A549 (cell line): ENCODE measurements at regions of chr11 and their contacts with region 1.

Region 1: GRCh38 chr11:44621140-44621681 is 55.7 kb downstream of the CD82 start:
- DNase-seq: peak; percentile 75 to 82
- ATAC-seq: peak; percentile 72 to 93
- H3K4me3 ChIP-seq: peak overlapping the region; percentile 38
- H3K27ac ChIP-seq: peak overlapping the region; percentile 67 to 69
- H3K4me1 ChIP-seq: no peaks in the 10 kb centered on the region
- CTCF ChIP-seq: peak; percentile 96
- EP300 ChIP-seq: no peak
- POLR2A ChIP-seq: no peak
- RAD21 ChIP-seq: peak; percentile 95 to 99

Region 2: DNA sequence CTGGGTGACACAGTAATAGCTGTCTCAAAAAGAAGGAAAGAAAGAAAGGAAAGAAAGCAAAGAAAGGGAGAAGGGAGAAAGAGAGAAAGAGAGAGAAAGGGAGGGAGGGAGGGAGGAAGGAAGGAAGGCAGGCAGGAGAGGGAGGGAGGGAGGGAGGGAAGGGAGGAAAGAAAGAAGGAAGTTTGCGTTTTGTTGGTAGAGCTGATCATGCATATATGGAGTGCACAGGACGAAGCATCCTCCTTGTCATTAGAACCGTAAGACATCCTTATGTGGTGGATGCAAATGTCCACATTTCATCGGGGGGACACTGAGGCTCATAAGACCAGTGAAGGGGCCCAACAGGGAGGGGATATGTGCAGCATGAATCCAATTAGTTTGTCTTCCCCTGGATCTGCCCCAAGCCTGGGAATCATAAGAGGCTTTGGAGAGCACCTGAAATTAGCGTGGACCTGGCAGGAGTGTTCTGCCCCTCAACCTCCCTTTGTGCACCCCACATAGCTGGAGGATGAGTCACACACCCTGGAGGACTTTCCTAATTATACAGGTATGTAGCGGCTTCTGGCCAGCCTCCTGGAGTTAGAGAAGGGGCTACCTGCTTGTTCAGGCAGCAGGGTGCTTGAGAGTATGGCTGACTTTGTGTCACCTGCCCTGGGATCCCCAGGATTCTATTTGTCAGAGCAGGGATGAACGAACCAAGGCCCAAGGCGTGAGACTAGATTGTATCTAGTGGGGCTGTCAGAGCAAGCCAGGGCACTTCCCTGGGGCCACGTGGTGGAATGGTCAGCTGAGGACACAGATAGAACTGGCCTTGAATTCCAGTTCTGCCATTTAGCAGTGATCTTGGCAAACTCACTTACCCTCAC is 175.5 kb before region 1 on chr11:
- CTCF ChIA-PET with region 1: no interaction called
- POLR2A ChIA-PET with region 1: no interaction called
- DNase-seq: peak in 1 of 2 experiments; percentile 5
- ATAC-seq: peak; percentile 58 to 64; a peak in 5 of 6 replicates
- H3K4me3 ChIP-seq: no peak overlapping the region
- H3K27ac ChIP-seq: no peak overlapping the region
- H3K4me1 ChIP-seq: 0 out of 3 replicates have a peak, but pooled peaks cover 5% of the 10 kb centered on the region
- CTCF ChIP-seq: no peak
- EP300 ChIP-seq: no peak
- POLR2A ChIP-seq: no peak
- RAD21 ChIP-seq: no peak

Region 3: GRCh38 chr11:44565211-44565952 is 55.8 kb before region 1 on chr11 and contains the start of gene CD82:
- CTCF ChIA-PET with region 1: interaction called, 865 read pairs
- POLR2A ChIA-PET with region 1: interaction called, 4 read pairs
- DNase-seq: peak; percentile 95 to 96
- ATAC-seq: peak; percentile 88 to 97
- H3K4me3 ChIP-seq: peak within 1 kb of the TSS; percentile 55
- H3K27ac ChIP-seq: peak within 1 kb of the TSS; percentile 81 to 84
- H3K4me1 ChIP-seq: peaks cover 19% of the 10 kb centered on the region
- CTCF ChIP-seq: no peak
- EP300 ChIP-seq: no peak
- POLR2A ChIP-seq: peak; percentile 25
- RAD21 ChIP-seq: no peak; a peak in 1 of 5 replicates
- polyA plus RNA-seq, gene CD82: 3.0 and 3.2 TPM in 2 replicates

Region 4: GRCh38 chr11:44578279-44578678 is 42.9 kb before region 1 on chr11:
- CTCF ChIA-PET with region 1: interaction called, 865 read pairs
- POLR2A ChIA-PET with region 1: no interaction called
- DNase-seq: no peak
- ATAC-seq: no peak
- H3K4me3 ChIP-seq: no peak overlapping the region
- H3K27ac ChIP-seq: no peak overlapping the region
- H3K4me1 ChIP-seq: no peaks in the 10 kb centered on the region
- CTCF ChIP-seq: no peak
- EP300 ChIP-seq: no peak
- POLR2A ChIP-seq: no peak
- RAD21 ChIP-seq: no peak

Region 5: DNA sequence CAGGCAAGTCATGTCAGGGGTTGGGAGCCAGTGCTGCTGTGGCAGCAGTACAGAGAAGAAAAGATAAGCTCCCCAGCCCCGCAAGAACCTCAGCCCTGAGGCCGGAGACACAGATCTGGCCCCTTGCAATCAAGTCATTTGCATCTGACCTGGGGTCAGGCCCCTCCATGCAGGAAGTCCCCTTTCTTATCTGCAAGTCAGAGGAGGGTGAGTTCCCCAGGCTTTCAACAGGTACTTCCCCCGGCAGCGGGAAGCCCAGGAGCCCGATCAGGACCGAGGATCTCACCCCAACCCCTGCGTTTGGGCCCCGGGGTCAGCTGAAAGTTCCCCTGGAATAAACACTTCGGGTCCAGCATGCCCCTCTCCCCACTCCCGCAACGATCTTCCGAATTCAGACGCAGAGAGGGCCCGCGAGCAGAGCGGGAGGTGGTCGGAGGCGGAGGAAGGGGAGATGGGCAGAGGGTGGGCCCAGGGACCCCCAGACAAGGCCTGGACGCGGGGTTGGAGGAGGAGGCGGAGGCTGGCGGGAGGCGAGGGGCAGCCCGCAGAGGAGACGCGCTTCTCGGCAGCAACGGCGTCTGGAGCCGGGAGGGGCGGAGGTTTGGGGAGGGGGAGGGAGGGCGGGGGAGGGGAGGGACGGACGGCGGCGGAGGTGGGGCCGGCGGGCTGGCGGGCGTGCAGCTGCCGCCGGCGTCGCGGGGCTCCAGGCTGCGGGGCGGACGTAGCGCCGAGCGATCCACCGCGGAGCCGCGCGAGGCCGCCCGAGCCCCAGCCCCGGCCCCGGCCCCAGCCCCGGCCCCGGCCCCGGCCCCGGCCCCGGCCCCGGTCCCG is 105.3 kb after region 1 on chr11 and contains the start of gene TSPAN18:
- CTCF ChIA-PET with region 1: interaction called, 10 read pairs
- POLR2A ChIA-PET with region 1: no interaction called
- DNase-seq: no peak
- ATAC-seq: peak in 1 of 2 experiments; percentile 51; a peak in 2 of 6 replicates
- H3K4me3 ChIP-seq: peak within 1 kb of the TSS; percentile 56
- H3K27ac ChIP-seq: peak within 1 kb of the TSS; percentile 59 to 86
- H3K4me1 ChIP-seq: peaks cover 7% of the 10 kb centered on the region; the same call in 1 of the 3 replicates
- CTCF ChIP-seq: no peak
- EP300 ChIP-seq: no peak
- POLR2A ChIP-seq: no peak
- RAD21 ChIP-seq: no peak
- polyA plus RNA-seq, gene TSPAN18: 0.81 and 0.98 TPM in 2 replicates

Region 6: DNA sequence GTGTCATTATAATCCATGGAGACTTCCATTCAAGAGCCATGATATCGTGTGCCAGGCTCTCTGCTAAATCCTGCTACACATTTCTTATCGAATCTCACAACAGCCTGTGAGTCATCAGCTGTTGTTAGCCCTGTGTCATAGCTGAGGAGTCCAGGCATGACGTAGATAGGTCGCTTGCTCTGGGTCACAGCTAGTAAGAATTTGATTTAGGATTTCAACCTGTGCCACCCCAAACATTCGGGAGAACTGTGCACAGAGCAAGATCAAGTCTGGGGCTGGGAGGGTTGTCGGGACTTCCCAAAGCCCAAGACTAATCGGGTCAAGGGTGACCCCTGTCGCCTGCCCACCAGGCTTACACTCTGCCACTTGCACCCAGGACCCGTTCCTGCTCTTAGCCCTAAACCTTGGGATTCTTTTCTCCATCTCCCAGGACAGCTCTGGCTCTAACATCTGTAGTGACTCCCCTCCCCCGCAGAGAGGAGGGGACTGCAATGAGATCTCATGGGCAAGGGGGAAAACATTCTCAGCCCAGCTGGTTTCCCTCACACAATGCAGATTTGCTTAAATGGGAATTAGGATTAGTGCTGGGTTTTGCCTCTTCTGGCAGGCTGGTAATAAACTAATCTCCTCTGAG is 139.8 kb after region 1 on chr11:
- CTCF ChIA-PET with region 1: interaction called, 11 read pairs
- POLR2A ChIA-PET with region 1: no interaction called
- DNase-seq: peak; percentile 70 to 71
- ATAC-seq: peak; percentile 95 to 97
- H3K4me3 ChIP-seq: no peak overlapping the region
- H3K27ac ChIP-seq: peak overlapping the region in 1 of 2 experiments; percentile 64; a peak in 3 of 6 replicates
- H3K4me1 ChIP-seq: peaks cover 24% of the 10 kb centered on the region
- CTCF ChIP-seq: no peak
- EP300 ChIP-seq: no peak
- POLR2A ChIP-seq: no peak
- RAD21 ChIP-seq: no peak

Region 7: GRCh38 chr11:44899959-44900358 is 278.7 kb after region 1 on chr11:
- CTCF ChIA-PET with region 1: interaction called, 50 read pairs
- POLR2A ChIA-PET with region 1: no interaction called
- DNase-seq: peak; percentile 27 to 73
- ATAC-seq: peak; percentile 31 to 79; a peak in 3 of 6 replicates
- H3K4me3 ChIP-seq: no peak overlapping the region
- H3K27ac ChIP-seq: no peak overlapping the region
- H3K4me1 ChIP-seq: no peaks in the 10 kb centered on the region
- CTCF ChIP-seq: no peak
- EP300 ChIP-seq: no peak
- POLR2A ChIP-seq: no peak
- RAD21 ChIP-seq: no peak

Region 8: DNA sequence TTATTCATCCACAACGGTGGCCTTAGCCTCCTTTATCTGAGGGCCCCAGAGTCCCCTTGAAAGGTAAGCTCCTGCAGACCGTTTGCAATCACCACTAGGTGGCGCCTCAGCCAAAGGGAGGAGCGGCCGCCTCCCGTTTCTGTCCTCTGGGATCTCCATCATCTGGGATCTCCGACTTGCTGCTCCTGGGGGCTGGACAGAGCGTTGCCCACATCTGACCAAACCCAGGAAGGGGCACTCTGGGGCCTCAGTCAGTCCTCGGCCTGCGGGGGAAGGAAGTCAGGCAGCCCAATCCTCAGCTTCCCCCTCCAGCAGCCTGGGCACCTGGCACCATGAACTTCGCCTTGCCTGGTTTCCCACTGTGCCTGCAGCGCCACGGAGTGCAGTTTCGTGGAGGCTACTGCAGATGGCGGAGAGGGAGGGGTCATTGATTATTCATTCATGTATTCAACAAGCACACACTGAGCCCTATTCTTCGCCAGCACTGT is 306.0 kb after region 1 on chr11:
- CTCF ChIA-PET with region 1: interaction called, 16 read pairs
- POLR2A ChIA-PET with region 1: no interaction called
- DNase-seq: peak; percentile 79 to 84
- ATAC-seq: peak; percentile 86 to 93
- H3K4me3 ChIP-seq: no peak overlapping the region
- H3K27ac ChIP-seq: no peak overlapping the region
- H3K4me1 ChIP-seq: no peaks in the 10 kb centered on the region
- CTCF ChIP-seq: peak; percentile 91
- EP300 ChIP-seq: no peak
- POLR2A ChIP-seq: no peak
- RAD21 ChIP-seq: peak; percentile 83 to 89